Gastrocnemius medialis (tissue), 4 donors: ENCODE measurements at regions of chr13 and their contacts with region 1.

Region 1: GRCh38 chr13:33799950-33800592 is 17.9 kb upstream of the RFC3 start:
- DNase-seq: no peak
- ATAC-seq: no peak
- H3K4me3 ChIP-seq: no peak overlapping the region
- H3K27ac ChIP-seq: peak overlapping the region in 3 of 4 donors; percentile 15 to 35 (median 21)
- H3K4me1 ChIP-seq: peaks cover 17 to 39% of the 10 kb centered on the region in 2 donors
- H3K27me3 ChIP-seq: no peaks in the 10 kb centered on the region
- CTCF ChIP-seq: peak in 3 of 5 experiments; percentile 10 to 48 (median 31)
- POLR2A ChIP-seq: no peak

Region 2: DNA sequence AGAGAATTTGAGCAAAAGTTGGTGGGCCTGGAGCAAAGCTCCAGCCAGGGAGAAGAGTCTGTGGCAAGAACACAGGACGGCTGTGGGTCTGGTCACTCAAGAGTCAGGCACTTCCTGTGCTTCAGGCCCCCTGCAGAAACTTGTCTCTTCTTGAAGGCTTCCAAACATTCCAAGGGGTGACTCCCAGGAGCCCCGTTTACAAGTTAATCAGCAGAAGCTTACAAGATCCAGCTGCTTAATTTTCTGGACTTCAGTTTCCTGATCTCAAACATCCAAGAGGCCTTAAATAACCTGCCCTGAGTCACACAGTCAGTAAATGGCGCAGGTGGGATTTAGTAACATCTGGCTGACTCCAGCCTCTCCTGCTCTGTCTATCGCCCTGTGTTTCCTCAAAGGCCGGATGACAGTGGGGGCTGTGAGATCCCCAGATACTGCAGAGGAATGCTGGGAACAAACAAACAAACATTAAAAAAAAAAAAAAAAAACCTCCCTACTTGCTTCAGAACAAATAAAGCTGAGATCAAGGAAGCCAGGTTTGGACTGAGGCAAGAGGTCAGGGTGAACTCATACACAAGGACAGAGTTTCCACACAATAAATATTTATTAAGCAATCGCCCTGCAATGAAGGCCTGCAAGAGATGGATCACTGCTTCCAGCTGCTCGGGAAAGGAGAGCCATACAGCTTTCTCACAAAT is 157.6 kb before region 1 on chr13:
- in situ Hi-C with region 1: no loop called
- intact Hi-C with region 1: loop called (anchors 1 kb)
- DNase-seq: peak; percentile 52 to 75
- ATAC-seq: peak; percentile 78 to 88
- H3K4me3 ChIP-seq: no peak overlapping the region
- H3K27ac ChIP-seq: peak overlapping the region; percentile 66 to 76 (median 74)
- H3K4me1 ChIP-seq: peaks cover 18 to 47% of the 10 kb centered on the region in 2 donors
- H3K27me3 ChIP-seq: no peaks in the 10 kb centered on the region
- CTCF ChIP-seq: no peak
- POLR2A ChIP-seq: no peak

Region 3: DNA sequence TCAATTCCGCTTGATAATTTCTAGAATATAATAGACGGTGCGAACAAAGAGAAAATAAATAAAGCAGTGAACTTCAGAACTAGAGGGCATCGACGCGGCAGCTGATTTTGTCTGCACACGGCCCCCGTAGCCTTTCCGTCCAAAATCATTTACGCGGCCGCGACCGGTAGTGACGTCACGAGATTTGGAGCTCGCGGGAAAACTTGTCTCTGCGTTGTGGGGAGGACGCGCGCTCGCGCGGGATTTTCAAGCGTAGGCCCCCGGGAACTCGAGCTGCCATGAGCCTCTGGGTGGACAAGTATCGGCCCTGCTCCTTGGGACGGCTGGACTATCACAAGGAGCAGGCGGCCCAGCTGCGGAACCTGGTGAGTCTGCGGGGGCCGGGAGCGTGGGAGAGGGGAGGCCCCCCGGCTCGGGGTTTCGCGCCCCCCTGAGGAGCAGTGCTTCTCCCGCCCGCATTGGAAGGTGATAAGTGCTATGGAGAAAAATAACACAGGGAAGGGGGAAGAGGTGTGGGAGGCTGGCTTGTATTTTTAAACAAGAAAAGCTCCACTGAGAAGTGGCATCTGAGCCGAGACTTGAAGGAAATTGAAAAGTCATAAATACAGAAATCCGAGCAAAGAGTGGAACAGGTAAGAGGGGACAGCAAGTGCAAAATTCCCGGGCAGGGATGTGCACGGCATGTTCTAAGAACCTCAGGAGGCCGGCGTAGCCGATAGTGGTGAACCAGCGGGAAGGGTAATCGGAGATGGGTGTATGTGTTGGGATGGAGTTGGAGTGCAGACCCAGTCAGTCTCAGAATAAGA is 18.0 kb after region 1 on chr13 and contains the start of gene RFC3:
- in situ Hi-C with region 1: no loop called
- intact Hi-C with region 1: loop called (anchors 2 kb)
- DNase-seq: peak; percentile 75 to 88
- ATAC-seq: peak; percentile 91 to 98
- H3K4me3 ChIP-seq: peak within 1 kb of the TSS; percentile 75 to 94 (median 86)
- H3K27ac ChIP-seq: peak within 1 kb of the TSS; percentile 61 to 73 (median 71)
- H3K4me1 ChIP-seq: peaks cover 3 to 5% of the 10 kb centered on the region in 2 donors
- H3K27me3 ChIP-seq: no peaks in the 10 kb centered on the region
- CTCF ChIP-seq: peak in 1 of 5 experiments; percentile 20
- POLR2A ChIP-seq: peak; percentile 12 to 19
- total RNA-seq, gene RFC3: 2.2 to 5.6 (median 3.7) TPM

Region 4: GRCh38 chr13:33968520-33969507 is 168.7 kb after region 1 on chr13:
- in situ Hi-C with region 1: no loop called
- intact Hi-C with region 1: no loop called
- DNase-seq: no peak
- ATAC-seq: no peak
- H3K4me3 ChIP-seq: no peak overlapping the region
- H3K27ac ChIP-seq: no peak overlapping the region
- H3K4me1 ChIP-seq: no peaks in the 10 kb centered on the region
- H3K27me3 ChIP-seq: no peaks in the 10 kb centered on the region
- CTCF ChIP-seq: no peak
- POLR2A ChIP-seq: no peak

Region 5: DNA sequence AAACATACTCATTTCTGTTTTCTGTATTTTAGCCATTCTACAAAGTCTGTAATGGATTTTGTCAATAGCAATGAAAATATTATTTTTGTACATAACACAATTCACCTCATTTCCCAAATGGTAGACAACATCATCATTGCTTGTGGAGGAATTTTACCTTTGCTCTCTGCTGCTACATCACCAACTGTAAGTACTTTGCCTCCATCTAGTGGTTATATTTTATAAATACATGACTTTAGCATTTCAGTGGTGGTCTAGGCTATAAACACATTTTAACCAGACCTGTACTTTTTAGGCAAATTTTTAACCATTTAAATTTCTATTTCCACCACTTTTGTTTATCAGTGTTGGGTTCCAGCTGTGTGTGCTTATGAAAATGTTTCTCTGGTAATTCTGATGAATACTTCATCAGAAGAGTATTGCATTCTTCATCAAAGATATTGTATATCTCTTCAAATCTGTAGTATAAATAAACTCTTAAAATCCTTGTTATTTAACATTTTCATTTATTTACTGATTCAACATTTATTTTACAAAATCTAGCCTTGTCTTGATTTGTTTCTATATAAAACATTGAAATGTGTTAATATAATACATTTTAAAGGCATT is 1364.4 kb after region 1 on chr13:
- in situ Hi-C with region 1: no loop called
- intact Hi-C with region 1: loop called (anchors 10 kb)
- DNase-seq: no peak
- ATAC-seq: peak in 1 of 2 donors; percentile 56
- H3K4me3 ChIP-seq: no peak overlapping the region
- H3K27ac ChIP-seq: no peak overlapping the region
- H3K4me1 ChIP-seq: no peaks in the 10 kb centered on the region
- H3K27me3 ChIP-seq: no peaks in the 10 kb centered on the region
- CTCF ChIP-seq: peak; percentile 31 to 64 (median 48)
- POLR2A ChIP-seq: no peak